ENCODE measurements at regions of chr10 and their contacts with region 1.

Region 1: DNA sequence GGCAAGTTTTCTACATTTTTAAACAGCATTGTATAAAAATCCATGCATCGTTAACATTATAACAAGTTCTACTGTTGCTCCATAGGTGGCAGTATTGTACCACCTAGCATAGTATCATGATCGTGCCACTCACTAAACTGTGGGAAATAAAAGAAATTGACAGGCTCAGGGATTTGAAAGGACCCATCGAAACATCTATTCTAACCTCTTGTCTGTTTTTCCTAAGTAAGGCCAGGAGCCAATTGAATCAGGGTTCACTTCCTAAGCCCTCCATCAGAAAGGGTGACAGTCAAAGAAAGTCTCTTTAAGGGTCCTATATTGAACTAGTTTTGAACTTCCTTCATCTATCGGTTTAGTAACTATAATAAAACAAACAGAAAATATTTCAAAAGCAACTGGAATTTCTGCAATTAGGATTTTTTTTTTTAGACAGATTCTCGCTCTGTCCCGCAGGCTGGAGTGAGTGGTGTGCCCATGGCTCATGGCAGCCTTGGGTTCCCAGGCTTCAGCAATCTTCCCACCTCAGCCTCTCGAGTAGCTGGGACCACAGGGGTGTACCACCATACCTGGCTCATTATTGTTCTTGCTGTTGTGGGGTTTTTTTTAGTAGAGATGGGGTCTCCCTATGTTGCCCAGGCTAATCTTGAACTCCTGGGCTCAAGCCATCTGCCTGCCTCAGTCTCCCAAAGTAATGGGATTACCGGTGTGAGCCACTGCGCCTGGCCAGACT is 9.4 kb downstream of the HACD1 start:
- DNase-seq: no peak
- H3K4me3 ChIP-seq: no peak overlapping the region
- H3K27ac ChIP-seq: no peak overlapping the region
- H3K4me1 ChIP-seq: no peaks in the 10 kb centered on the region
- H3K27me3 ChIP-seq: no peaks in the 10 kb centered on the region
- CTCF ChIP-seq: peak; percentile 60 to 82 (median 73)
- POLR2A ChIP-seq: no peak

Region 2: GRCh38 chr10:17409170-17409733 is 198.5 kb before region 1 on chr10:
- intact Hi-C with region 1: no loop called
- DNase-seq: no peak
- H3K4me3 ChIP-seq: no peak overlapping the region
- H3K27ac ChIP-seq: no peak overlapping the region
- H3K4me1 ChIP-seq: no peaks in the 10 kb centered on the region
- H3K27me3 ChIP-seq: no peaks in the 10 kb centered on the region
- CTCF ChIP-seq: no peak
- POLR2A ChIP-seq: no peak

Region 3: DNA sequence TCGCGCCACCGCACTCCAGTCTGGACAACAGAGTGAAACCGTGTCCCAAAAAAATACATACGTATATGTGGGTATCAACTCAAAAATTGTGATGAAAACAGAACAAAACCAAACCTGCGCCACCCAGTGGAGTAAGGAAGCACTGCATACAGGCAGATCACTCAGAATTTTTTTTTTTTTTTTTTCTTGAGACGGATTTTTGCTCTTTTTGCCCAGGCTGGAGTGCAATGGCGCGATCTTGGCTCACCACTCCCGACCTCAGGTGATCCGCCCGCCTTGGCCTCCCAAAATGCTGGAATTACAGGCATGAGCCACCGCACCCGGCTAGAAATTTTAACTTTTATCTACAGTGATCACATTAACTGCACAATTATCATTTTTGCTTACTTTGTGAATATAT is 135.2 kb after region 1 on chr10:
- intact Hi-C with region 1: loop called (anchors 10 kb)
- DNase-seq: peak; percentile 75
- H3K4me3 ChIP-seq: no peak overlapping the region
- H3K27ac ChIP-seq: no peak overlapping the region
- H3K4me1 ChIP-seq: no peaks in the 10 kb centered on the region
- H3K27me3 ChIP-seq: no peaks in the 10 kb centered on the region
- CTCF ChIP-seq: peak; percentile 78 to 96 (median 82)
- POLR2A ChIP-seq: no peak